Endothelial cell of umbilical vein (primary cell): ENCODE measurements at regions of chr2 and their contacts with region 1.

Region 1: DNA sequence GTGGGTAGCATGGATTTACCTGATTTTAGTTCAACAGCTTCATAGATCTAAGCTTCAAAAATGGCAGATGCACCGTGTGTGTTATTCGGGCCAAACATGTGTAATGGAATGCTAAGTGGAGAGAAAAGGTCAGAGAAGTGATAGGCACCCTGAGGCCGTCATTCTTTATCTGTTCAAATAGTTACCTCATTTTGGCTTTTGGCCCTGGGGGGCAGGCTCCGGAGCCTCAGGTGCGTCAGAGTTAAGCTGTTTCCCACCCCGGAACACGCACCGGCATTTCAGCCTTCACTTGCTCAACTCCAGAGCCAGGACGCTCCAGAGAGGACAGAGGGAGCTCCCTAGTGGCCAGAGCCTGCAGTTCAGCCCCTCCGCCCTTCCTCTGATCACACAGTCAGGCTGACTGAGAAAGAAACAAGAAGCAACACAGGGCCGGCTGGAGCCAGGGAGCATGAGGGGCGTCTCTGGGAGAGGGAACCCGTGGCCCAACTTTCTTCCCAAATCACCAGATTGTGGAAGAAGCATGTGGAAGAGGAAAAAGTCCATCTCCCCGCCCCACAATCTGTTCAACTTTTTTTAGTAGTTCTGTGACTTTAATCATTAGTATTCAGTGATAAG is 135.2 kb upstream of the EPC2 start:
- DNase-seq: peak; percentile 87
- H3K4me3 ChIP-seq: peak overlapping the region in 2 of 3 experiments; percentile 27 to 62
- H3K27ac ChIP-seq: no peak overlapping the region
- H3K4me1 ChIP-seq: peaks cover 5% of the 10 kb centered on the region
- H3K27me3 ChIP-seq: no peaks in the 10 kb centered on the region
- CTCF ChIP-seq: peak; percentile 87 to 97
- POLR2A ChIP-seq: no peak

Region 2: GRCh38 chr2:147937744-147938349 is 571.5 kb before region 1 on chr2:
- CTCF ChIA-PET with region 1: interaction called, 18 read pairs
- POLR2A ChIA-PET with region 1: no interaction called
- dilution Hi-C with region 1: no loop called
- intact Hi-C with region 1: loop called (anchors 1 kb)
- DNase-seq: peak; percentile 36
- H3K4me3 ChIP-seq: no peak overlapping the region
- H3K27ac ChIP-seq: no peak overlapping the region
- H3K4me1 ChIP-seq: no peaks in the 10 kb centered on the region
- H3K27me3 ChIP-seq: no peaks in the 10 kb centered on the region
- CTCF ChIP-seq: peak; percentile 51 to 69
- POLR2A ChIP-seq: no peak

Region 3: DNA sequence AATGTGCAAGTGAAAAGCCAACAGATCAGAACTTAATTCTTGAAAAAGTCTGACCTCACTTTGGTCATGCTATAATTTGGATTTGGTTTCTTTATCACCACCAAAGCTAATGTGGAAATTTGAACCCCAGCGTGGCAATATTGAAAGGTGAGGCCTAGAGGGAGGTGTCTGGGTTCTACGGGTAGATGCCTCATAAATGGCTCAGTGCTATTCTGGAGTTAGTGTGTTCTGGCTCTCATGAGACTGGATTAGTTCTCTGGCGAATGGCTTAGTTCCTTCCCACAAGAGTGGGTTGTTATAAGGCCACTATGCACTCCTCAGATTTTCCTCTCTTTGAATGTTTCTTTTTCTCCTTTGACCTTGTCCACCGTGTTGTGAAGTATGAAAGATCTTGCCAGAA is 511.2 kb before region 1 on chr2:
- CTCF ChIA-PET with region 1: interaction called, 174 read pairs
- POLR2A ChIA-PET with region 1: no interaction called
- dilution Hi-C with region 1: no loop called
- intact Hi-C with region 1: no loop called
- DNase-seq: no peak
- H3K4me3 ChIP-seq: no peak overlapping the region
- H3K27ac ChIP-seq: no peak overlapping the region
- H3K4me1 ChIP-seq: no peaks in the 10 kb centered on the region
- H3K27me3 ChIP-seq: no peaks in the 10 kb centered on the region
- CTCF ChIP-seq: no peak
- POLR2A ChIP-seq: no peak

Region 4: DNA sequence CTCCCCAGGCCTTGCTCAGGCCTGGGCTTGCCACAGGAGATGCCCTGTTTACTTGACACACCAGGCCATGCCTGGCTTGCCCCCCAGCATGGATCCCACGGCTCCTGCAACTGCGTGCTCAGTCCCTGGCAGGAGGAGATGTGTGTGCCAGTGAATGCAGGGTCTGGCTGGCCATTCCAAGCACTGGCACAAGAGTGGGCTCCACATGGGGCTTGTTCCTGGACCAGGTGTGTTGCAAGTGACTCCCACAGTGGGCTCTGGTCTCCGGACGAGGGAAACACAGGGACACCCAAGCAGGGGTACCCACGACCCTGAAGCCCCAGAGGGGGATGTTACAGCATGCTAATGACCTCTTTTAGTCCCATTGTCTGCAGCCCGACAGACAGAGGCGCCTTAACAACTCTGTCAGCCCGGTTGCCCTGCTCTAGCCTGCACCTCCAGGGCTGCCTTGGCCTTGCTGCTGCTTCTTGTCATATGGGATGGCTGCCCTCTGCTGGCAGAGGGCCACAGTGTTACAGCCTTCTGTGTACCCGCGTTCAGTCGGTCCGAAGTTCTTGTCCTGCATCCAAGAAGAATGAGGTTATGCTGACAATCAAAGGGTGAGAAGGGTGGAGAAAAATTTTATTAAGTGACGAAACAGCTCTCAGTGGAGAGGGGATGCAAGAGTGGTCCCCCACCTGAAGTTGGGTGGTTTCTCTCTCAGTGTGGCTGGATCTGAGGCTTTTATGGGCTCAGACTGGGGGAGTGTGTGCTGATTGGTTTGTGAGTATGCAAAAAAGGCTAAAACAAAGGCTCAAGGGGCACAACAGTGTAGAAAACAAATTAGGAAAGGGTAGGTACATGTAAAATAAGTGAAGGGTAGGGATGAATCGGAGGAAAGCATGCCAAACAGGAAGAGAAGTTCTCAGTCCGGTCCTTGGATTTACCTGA is 308.1 kb before region 1 on chr2:
- CTCF ChIA-PET with region 1: interaction called, 7 read pairs
- POLR2A ChIA-PET with region 1: no interaction called
- dilution Hi-C with region 1: no loop called
- intact Hi-C with region 1: loop called (anchors 1 kb)
- DNase-seq: peak; percentile 22
- H3K4me3 ChIP-seq: no peak overlapping the region
- H3K27ac ChIP-seq: no peak overlapping the region
- H3K4me1 ChIP-seq: no peaks in the 10 kb centered on the region
- H3K27me3 ChIP-seq: no peaks in the 10 kb centered on the region
- CTCF ChIP-seq: peak; percentile 29 to 53
- POLR2A ChIP-seq: no peak

Region 5: DNA sequence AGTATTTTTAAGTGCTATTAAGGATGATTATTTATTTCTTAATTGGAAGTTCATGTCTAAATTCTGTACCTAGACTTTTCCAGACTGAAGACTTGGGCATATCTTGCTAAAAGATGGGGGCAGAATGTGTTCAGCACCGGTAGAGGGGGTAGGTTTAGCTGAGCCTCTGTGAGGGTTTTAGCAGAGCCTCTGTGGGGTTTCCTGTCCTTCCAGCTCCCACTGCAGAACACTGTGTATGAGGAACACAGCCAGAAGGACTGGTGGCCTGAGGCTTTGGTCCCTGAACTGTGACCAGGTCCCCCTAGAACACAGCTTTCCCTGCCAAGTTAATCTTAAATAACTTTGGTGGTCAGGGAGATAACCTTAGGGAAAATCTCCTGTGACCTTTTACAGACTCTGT is 11.8 kb after region 1 on chr2:
- CTCF ChIA-PET with region 1: interaction called, 24 read pairs
- POLR2A ChIA-PET with region 1: no interaction called
- dilution Hi-C with region 1: no loop called
- intact Hi-C with region 1: no loop called
- DNase-seq: no peak
- H3K4me3 ChIP-seq: no peak overlapping the region
- H3K27ac ChIP-seq: no peak overlapping the region
- H3K4me1 ChIP-seq: peaks cover under 1% of the 10 kb centered on the region
- H3K27me3 ChIP-seq: no peaks in the 10 kb centered on the region
- CTCF ChIP-seq: no peak
- POLR2A ChIP-seq: no peak

Region 6: DNA sequence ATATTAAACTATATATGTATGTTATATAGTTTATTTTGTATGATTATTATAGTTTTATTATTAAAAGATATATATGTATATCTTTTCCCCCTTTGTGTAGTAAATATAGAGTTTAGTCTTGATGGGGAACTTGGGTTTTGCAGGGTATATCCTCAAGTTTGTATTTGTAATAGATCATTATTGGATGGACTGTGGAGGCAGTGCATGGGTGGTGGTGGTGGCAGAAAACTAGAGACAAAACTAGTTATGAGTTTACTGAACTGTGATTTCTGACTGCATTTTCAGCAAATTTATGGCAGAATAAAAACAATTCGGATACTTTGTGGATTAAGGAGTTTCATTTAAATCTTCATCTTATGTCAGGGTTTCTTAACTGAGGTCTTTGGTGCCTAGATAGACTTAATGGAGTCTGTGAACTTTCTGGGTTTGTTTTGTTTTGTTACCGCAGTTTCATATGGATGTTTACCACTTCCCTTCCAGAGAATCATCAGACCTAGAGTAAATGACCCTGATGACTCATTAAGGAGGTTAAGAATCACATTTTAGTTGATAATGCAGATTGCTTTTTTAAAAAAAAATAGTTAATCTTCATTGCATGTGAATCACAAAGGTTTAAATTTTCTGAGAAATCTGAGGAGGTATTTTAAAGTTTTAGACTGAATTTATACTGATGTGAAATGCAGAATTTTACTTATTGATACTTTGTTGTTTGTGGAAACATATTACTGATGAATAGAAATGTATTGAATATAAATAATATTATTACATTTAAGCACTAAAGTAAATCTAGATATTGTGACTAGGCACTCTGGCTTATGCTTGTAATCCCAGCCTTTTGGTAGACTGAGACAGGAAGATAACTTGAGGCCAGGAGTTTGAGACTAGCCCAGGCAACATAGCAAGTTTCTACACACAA is 149.7 kb after region 1 on chr2:
- CTCF ChIA-PET with region 1: no interaction called
- POLR2A ChIA-PET with region 1: no interaction called
- dilution Hi-C with region 1: no loop called
- intact Hi-C with region 1: no loop called
- DNase-seq: peak; percentile 75
- H3K4me3 ChIP-seq: no peak overlapping the region
- H3K27ac ChIP-seq: no peak overlapping the region
- H3K4me1 ChIP-seq: peaks cover 24% of the 10 kb centered on the region
- H3K27me3 ChIP-seq: no peaks in the 10 kb centered on the region
- CTCF ChIP-seq: no peak
- POLR2A ChIP-seq: no peak

Region 7: DNA sequence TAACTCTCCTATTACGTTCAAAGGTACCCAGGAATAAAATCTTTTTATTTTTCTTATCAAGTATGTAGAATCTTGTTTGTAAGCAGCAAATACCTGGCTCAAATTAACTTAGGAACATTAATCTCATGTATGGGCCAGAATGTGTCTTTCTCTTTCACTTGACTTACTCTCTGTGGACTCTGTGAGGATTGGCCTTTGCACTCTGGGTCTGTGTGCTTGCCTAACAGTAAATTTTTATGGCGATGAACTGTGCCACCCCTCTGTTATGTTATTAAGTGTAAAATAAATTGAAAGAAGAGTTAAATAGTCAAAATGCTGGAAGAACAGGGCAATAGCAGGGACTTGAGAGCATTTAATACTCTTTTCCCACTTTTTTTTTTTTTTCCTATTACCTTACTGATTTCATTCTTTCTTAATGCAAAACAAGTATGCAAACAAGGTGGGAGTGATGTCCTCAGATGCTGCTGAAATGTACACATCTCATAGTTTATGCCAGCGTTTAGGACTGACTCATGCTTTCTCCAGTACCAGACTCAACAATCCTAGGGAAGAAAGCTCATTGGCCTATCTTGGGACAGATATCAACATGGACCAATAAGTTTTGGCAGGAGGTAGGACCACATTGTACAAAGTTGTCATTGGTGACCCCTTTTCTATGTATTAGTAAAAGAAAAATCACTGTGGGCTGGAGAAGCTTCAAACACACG is 846.5 kb after region 1 on chr2:
- CTCF ChIA-PET with region 1: no interaction called
- POLR2A ChIA-PET with region 1: no interaction called
- dilution Hi-C with region 1: no loop called
- intact Hi-C with region 1: no loop called
- DNase-seq: no peak
- H3K4me3 ChIP-seq: no peak overlapping the region
- H3K27ac ChIP-seq: no peak overlapping the region
- H3K4me1 ChIP-seq: no peaks in the 10 kb centered on the region
- H3K27me3 ChIP-seq: no peaks in the 10 kb centered on the region
- CTCF ChIP-seq: no peak
- POLR2A ChIP-seq: no peak